Thyroid gland (tissue), 4 donors: ENCODE measurements at regions of chr17 and their contacts with region 1.

Region 1: DNA sequence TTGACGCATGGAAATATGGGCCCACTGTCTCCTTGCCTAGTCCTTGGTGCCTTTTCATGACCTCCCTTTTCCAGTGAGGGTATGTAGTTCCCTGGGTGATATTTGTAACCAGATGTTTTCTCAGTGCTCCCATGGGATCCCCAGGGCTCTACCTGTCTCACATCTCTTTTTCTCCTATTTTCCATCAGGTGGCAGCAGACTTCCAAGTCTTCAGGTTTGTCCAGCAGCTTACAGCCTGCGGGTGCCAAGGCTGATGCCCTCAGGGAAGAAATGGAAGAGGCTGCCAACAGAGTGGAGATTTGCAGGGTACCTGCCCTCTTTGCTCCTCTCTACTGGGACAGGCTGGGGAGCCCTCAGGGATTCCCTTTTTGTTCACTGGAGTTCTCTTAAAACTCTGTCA is 89.1 kb downstream of the ELAC2 start:
- DNase-seq: peak; percentile 16 to 33
- H3K4me3 ChIP-seq: no peak overlapping the region
- H3K27ac ChIP-seq: no peak overlapping the region
- H3K4me1 ChIP-seq: no peaks in the 10 kb centered on the region
- H3K27me3 ChIP-seq: no peaks in the 10 kb centered on the region
- CTCF ChIP-seq: peak in 4 of 6 experiments; percentile 13 to 44 (median 36)
- POLR2A ChIP-seq: no peak

Region 2: DNA sequence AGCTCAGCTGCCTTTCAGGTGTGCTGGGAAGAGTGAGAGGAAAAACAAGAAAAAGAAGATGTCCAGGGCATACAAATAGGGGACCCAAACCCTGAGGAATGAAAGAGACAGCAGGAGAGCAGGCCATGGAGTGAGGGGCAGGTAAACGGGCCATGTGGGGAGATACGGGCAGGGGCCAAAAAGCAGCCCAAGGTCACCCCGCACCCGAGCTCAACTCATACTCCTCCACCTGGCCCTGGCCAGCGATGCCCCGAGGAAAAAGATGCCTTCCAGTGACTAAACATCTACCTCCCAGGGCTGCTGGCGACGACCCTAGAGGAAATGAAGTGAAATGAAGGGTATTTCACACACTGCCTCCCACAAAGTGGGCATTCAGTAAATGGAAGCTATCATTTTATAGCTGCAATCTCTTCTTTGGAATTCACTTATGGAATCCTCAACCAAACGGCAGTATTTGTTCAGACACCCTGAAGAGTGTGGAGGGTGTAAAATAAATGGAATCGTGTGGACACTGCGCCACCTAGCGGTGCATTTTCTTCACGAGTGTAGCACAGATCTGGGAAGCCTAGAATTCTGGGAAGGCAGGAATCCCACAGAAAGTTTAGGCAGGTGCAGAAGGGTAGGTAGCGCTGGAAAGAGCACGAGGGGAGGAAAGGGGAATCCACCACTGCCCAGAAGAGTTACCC is 74.2 kb after region 1 on chr17:
- intact Hi-C with region 1: loop called (anchors 10 kb)
- DNase-seq: peak; percentile 90 to 93
- H3K4me3 ChIP-seq: no peak overlapping the region
- H3K27ac ChIP-seq: peak overlapping the region in 2 of 3 donors; percentile 38 to 67
- H3K4me1 ChIP-seq: peaks cover 16 to 20% of the 10 kb centered on the region in 2 donors
- H3K27me3 ChIP-seq: no peaks in the 10 kb centered on the region
- CTCF ChIP-seq: peak; percentile 78 to 87 (median 81)
- POLR2A ChIP-seq: no peak

Region 3: DNA sequence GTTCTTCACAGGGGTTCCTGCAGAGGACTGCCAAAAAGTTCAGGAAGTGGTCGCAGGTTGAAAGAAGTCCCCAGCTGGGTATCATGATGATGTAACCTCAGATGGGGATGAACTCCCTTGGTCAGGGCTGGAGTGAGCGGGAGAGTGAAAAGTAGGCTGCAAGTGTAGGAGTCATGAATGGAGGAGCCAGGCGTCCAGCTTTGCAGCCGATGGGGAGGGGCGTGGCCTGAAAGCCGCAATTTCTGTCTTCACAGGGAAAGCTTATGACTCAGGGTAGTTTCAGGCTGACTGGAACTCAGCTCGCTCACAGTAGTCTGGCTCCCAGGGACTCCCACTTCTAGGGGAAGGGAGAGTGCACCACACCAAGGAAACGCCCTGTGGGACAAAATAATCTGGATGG is 743.0 kb after region 1 on chr17:
- intact Hi-C with region 1: no loop called
- DNase-seq: no peak
- H3K4me3 ChIP-seq: no peak overlapping the region
- H3K27ac ChIP-seq: no peak overlapping the region
- H3K4me1 ChIP-seq: no peaks in the 10 kb centered on the region
- H3K27me3 ChIP-seq: no peaks in the 10 kb centered on the region
- CTCF ChIP-seq: no peak
- POLR2A ChIP-seq: no peak